CD8-positive, alpha-beta T cell (primary cell): ENCODE measurements at regions of chr11 and their contacts with region 1.

Region 1: DNA sequence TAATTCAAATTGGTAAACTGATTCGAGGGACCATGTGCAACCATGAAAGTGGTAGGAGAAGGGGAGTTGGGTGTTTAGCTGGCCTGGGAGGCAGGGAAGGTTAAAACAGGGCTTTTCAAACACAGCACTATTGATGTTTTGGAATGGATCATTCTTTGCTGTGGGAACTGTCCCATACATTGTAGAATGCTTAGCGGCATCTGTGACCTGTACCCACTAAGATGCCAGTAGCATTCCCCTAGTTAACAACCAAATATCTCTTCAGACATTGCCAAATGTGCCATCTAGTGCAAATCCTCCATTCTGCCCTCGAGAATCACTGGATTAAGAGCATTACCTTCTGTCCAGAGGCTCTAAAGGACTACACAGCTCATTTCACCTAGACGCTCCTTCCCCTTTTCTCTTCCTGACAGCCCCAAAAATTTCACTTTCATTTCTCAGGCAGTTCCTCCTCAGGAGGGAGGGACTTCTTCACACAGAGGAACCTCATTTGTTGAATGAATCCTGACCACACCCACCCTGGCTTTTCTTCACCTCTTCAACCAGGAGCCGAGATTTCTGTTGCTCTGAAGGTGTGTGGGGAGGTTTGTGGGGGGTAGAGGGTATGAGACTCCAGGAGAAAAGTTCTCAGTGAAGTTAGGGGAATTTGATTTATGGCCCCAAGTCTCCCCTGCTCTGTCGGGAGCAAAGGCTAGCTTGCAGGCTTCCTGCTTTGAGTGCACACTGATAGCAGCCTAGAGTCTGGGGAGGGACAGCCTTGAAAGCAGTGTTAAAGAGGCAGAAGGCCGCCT is at the start of gene TRIM34:
- DNase-seq: peak; percentile 19 to 88 (median 67)
- ATAC-seq: peak; percentile 98
- H3K4me3 ChIP-seq: peak within 1 kb of the TSS; percentile 62 to 75
- H3K4me3 Mint-ChIP-seq: peak within 1 kb of the TSS; percentile 92
- H3K27ac ChIP-seq: peak within 1 kb of the TSS; percentile 52 to 86
- H3K27ac Mint-ChIP-seq: peak within 1 kb of the TSS; percentile 93
- H3K4me1 ChIP-seq: peaks cover 26% of the 10 kb centered on the region
- H3K4me1 Mint-ChIP-seq: peaks cover 49% of the 10 kb centered on the region
- H3K27me3 ChIP-seq: no peaks in the 10 kb centered on the region
- H3K27me3 Mint-ChIP-seq: no peaks in the 10 kb centered on the region
- CTCF ChIP-seq: no peak
- total RNA-seq, gene TRIM34: 2.8 to 2.9 TPM

Region 2: GRCh38 chr11:4393209-4393857 is 1231.4 kb before region 1 on chr11 and contains the start of gene TRIM21:
- CTCF ChIA-PET with region 1: no interaction called
- POLR2A ChIA-PET with region 1: no interaction called
- intact Hi-C with region 1: loop called in 1 of 2 experiments (anchors 5 kb)
- DNase-seq: peak; percentile 78 to 93 (median 88)
- ATAC-seq: peak; percentile 99
- H3K4me3 ChIP-seq: peak within 1 kb of the TSS; percentile 81 to 89
- H3K4me3 Mint-ChIP-seq: peak within 1 kb of the TSS; percentile 94
- H3K27ac ChIP-seq: peak within 1 kb of the TSS; percentile 82 to 89
- H3K27ac Mint-ChIP-seq: peak within 1 kb of the TSS; percentile 95
- H3K4me1 ChIP-seq: peaks cover 18% of the 10 kb centered on the region
- H3K4me1 Mint-ChIP-seq: peaks cover 43% of the 10 kb centered on the region
- H3K27me3 ChIP-seq: no peaks in the 10 kb centered on the region
- H3K27me3 Mint-ChIP-seq: no peaks in the 10 kb centered on the region
- CTCF ChIP-seq: no peak
- total RNA-seq, gene TRIM21: 23.4 to 23.6 TPM

Region 3: GRCh38 chr11:4607781-4608666 is 1016.7 kb before region 1 on chr11 and contains the start of gene TRIM68:
- CTCF ChIA-PET with region 1: no interaction called
- POLR2A ChIA-PET with region 1: no interaction called
- intact Hi-C with region 1: loop called in 1 of 2 experiments (anchors 2 kb)
- DNase-seq: peak; percentile 89 to 96 (median 95)
- ATAC-seq: peak; percentile 99
- H3K4me3 ChIP-seq: peak within 1 kb of the TSS; percentile 81 to 84
- H3K4me3 Mint-ChIP-seq: peak within 1 kb of the TSS; percentile 93
- H3K27ac ChIP-seq: peak within 1 kb of the TSS; percentile 76 to 85
- H3K27ac Mint-ChIP-seq: peak within 1 kb of the TSS; percentile 92
- H3K4me1 ChIP-seq: peaks cover 33% of the 10 kb centered on the region
- H3K4me1 Mint-ChIP-seq: peaks cover 56% of the 10 kb centered on the region
- H3K27me3 ChIP-seq: no peaks in the 10 kb centered on the region
- H3K27me3 Mint-ChIP-seq: no peaks in the 10 kb centered on the region
- CTCF ChIP-seq: no peak
- total RNA-seq, gene TRIM68: 6.0 to 6.9 TPM

Region 4: DNA sequence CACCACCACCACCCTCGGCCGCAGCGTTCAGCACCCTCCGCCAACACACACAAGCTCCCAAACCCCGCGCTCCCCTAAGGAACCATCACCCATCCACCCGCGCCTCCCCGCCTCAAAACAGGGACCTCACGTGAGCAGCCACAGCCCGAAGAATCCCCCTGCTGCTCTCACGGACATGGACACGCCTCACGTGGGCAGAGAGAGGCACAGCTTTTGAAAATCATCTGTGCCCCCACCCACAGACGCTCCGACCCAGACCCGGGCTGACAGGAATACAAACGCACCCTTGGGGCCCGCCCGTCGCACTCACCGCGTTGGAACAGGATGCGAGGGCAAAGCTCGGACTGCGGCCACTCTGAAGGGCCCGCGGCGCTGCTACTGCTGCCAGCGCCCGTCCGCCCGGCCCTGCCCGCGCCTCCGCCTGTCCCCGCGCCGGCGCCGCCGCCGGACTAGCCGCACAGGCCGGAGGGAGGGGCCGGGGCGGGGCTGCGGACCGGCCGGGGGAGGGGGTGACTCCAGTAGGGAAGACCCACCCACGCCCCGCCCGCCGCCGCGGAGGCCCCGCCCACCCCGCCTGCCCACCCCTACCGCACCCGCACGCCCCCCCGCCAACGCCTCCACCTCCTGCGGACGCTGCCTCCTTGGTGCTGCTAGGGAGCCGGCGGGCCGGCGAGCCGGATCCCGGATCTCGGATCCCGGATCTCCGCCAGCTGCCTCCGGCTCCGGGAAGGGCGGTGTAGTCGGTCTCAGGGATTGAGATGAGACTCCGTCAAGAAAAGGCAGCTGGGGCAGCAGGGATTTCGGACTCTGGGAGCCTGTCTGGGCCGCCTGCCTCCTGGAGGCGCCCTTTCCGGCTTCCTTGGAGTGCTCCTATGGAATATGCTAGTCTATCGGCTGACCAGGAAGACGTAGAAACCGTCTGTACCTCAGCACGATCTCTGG is 849.1 kb after region 1 on chr11 and contains the start of gene TRIM3:
- CTCF ChIA-PET with region 1: no interaction called
- POLR2A ChIA-PET with region 1: no interaction called
- intact Hi-C with region 1: loop called in 1 of 2 experiments (anchors 10 kb)
- DNase-seq: peak; percentile 37 to 86 (median 74)
- ATAC-seq: peak; percentile 82
- H3K4me3 ChIP-seq: peak within 1 kb of the TSS; percentile 72 to 74
- H3K4me3 Mint-ChIP-seq: peak within 1 kb of the TSS; percentile 88
- H3K27ac ChIP-seq: peak within 1 kb of the TSS; percentile 37 to 78
- H3K27ac Mint-ChIP-seq: peak within 1 kb of the TSS; percentile 86
- H3K4me1 ChIP-seq: peaks cover 13% of the 10 kb centered on the region
- H3K4me1 Mint-ChIP-seq: peaks cover 22% of the 10 kb centered on the region
- H3K27me3 ChIP-seq: no peaks in the 10 kb centered on the region
- H3K27me3 Mint-ChIP-seq: no peaks in the 10 kb centered on the region
- CTCF ChIP-seq: no peak
- total RNA-seq, gene TRIM3: 14.5 to 18.3 TPM